Panc1 (cell line): ENCODE measurements at regions of chr12 and their contacts with region 1.

Region 1: GRCh38 chr12:42332301-42333285 is 6.6 kb downstream of the PPHLN1 start:
- DNase-seq: no peak
- ATAC-seq: peak; percentile 86
- H3K4me3 ChIP-seq: no peak overlapping the region
- H3K27ac ChIP-seq: no peak overlapping the region
- H3K4me1 ChIP-seq: peaks cover 5% of the 10 kb centered on the region
- H3K27me3 ChIP-seq: no peaks in the 10 kb centered on the region
- CTCF ChIP-seq: peak; percentile 72; the same call in 1 of the 2 replicates

Region 2: GRCh38 chr12:41981758-41982157 is 350.8 kb before region 1 on chr12:
- CTCF ChIA-PET with region 1: no interaction called
- POLR2A ChIA-PET with region 1: no interaction called
- in situ Hi-C with region 1: no loop called
- intact Hi-C with region 1: no loop called
- DNase-seq: no peak
- ATAC-seq: no peak
- H3K4me3 ChIP-seq: no peak overlapping the region
- H3K27ac ChIP-seq: no peak overlapping the region
- H3K4me1 ChIP-seq: no peaks in the 10 kb centered on the region
- H3K27me3 ChIP-seq: no peaks in the 10 kb centered on the region; the same call in 1 of the 2 replicates
- CTCF ChIP-seq: no peak

Region 3: GRCh38 chr12:42129595-42130204 is 202.9 kb before region 1 on chr12:
- CTCF ChIA-PET with region 1: interaction called, 3 read pairs
- POLR2A ChIA-PET with region 1: no interaction called
- in situ Hi-C with region 1: no loop called
- intact Hi-C with region 1: loop called (anchors 5 kb)
- DNase-seq: no peak
- ATAC-seq: peak; percentile 78; the same call in 1 of the 2 replicates
- H3K4me3 ChIP-seq: no peak overlapping the region
- H3K27ac ChIP-seq: no peak overlapping the region
- H3K4me1 ChIP-seq: peaks cover 10% of the 10 kb centered on the region; the same call in 1 of the 2 replicates
- H3K27me3 ChIP-seq: no peaks in the 10 kb centered on the region
- CTCF ChIP-seq: peak; percentile 78; the same call in 1 of the 2 replicates

Region 4: GRCh38 chr12:42144408-42145196 is 188.0 kb before region 1 on chr12 and contains the start of gene GXYLT1:
- CTCF ChIA-PET with region 1: interaction called, 3 read pairs
- POLR2A ChIA-PET with region 1: no interaction called
- in situ Hi-C with region 1: no loop called
- intact Hi-C with region 1: loop called (anchors 5 kb)
- DNase-seq: no peak
- ATAC-seq: peak; percentile 97
- H3K4me3 ChIP-seq: peak within 1 kb of the TSS; percentile 70 to 88
- H3K27ac ChIP-seq: peak within 1 kb of the TSS; percentile 94
- H3K4me1 ChIP-seq: peaks cover 29% of the 10 kb centered on the region
- H3K27me3 ChIP-seq: no peaks in the 10 kb centered on the region
- CTCF ChIP-seq: no peak
- total RNA-seq, gene GXYLT1: 17.4 TPM